Lower leg skin (tissue), 4 donors: ENCODE measurements at regions of chr10 and their contacts with region 1.

Region 1: DNA sequence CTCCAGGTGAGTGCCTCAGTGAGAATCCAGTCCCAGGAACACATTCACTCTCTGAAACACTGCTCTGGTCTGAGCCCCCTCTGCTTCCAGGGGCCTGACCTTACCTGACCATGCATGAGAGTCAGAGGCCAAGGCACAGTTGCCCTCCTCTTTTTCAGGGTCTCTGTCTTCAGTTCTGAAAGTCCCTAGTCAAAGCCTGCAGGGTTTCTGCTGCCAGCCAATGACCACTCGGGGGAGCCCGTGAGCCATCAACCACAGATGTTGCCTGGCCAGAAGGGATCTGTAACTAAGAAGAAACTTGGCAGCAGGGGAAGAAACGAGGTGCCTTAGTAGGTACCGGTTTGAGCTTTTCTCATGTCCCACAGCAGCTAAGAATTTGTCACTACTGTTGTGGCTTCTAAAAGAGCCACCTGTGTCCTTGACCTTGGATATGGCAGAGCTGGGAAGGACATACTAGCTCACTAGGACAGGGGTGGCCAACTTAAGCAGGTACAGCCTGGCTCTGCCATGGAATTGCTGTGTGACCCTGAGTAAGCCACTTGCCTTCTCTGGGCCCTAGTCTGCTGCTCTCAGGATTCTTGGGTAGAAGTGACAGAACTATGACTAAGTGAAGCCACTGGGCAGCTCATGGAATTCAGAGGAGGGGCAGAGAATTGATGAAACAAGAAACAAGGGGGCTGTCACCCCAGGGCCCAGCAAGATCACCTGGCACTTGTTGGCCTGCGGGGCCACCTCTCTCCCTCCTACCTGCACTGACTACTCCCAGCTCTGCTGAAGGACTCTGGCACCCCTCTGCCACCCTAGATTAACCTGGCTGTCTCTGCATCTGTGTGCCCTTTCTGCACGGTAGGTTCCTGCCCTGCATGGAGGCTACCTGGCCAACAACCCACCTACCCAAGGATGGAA is 83.8 kb upstream of the GPR26 start:
- DNase-seq: peak; percentile 68 to 94
- H3K4me3 ChIP-seq: no peak overlapping the region
- CTCF ChIP-seq: peak in 1 of 3 donors; percentile 37
- POLR2A ChIP-seq: no peak

Region 2: DNA sequence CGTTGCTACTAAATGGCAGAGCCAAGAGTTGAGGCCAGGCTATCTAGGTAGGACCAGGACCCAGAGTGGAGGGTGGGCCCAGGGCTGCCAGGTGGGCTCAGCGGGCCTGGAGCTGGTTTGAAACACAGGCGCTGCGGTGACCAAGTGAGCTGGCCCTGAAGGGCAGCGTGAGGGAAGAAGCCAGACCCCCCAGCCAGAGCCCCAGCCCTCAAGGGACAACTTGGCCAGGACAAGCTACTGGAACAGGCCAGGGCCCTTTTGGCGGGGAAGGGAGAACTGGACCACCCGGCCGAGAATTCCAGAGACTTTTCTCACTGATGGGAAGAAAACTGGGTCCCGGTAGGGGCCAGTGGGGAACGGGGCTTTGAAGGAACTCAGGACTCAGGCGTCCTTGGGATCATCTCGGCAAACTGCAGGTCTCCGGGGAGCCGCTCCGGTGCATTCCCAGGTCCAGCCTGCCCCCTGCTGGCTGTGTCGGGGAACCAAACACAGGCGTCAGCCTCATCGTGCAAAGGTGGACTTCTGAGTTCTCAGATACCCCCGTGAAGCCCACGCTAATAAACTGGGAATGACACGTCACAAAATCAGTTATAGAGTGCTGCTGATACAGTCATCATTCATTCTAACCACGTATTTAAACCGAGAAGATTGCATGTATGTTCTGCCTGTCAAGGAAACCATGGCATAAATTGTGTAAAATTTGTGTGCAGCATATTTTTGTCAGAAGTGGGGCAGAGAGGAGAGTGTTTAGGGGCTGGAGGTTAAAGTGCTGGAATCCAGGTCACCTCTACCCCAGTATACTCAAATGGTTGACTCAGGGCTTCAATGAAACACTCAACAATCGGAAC is 385.3 kb after region 1 on chr10:
- intact Hi-C with region 1: loop called (anchors 5 kb)
- DNase-seq: peak; percentile 60 to 93
- H3K4me3 ChIP-seq: no peak overlapping the region
- CTCF ChIP-seq: peak in 1 of 3 donors; percentile 71
- POLR2A ChIP-seq: no peak

Region 3: GRCh38 chr10:124378881-124379471 is 796.6 kb after region 1 on chr10:
- intact Hi-C with region 1: loop called (anchors 10 kb)
- DNase-seq: no peak
- H3K4me3 ChIP-seq: no peak overlapping the region
- CTCF ChIP-seq: no peak
- POLR2A ChIP-seq: no peak